Esophagus muscularis mucosa (tissue), 4 donors: ENCODE measurements at regions of chr19 and their contacts with region 1.

Region 1: GRCh38 chr19:37506387-37507166 is at the start of gene ZNF793:
- DNase-seq: peak; percentile 93
- H3K4me3 ChIP-seq: peak within 1 kb of the TSS; percentile 71 to 81 (median 78)
- H3K27ac ChIP-seq: peak within 1 kb of the TSS; percentile 90 to 97 (median 93)
- H3K4me1 ChIP-seq: peaks cover 12 to 24% (median 17%) of the 10 kb centered on the region in 4 donors
- H3K27me3 ChIP-seq: no peaks in the 10 kb centered on the region
- CTCF ChIP-seq: no peak
- EP300 ChIP-seq: no peak
- POLR2A ChIP-seq: no peak
- total RNA-seq, gene ZNF793: 3.0 to 7.1 (median 5.3) TPM

Region 2: GRCh38 chr19:37334179-37335071 is 172.2 kb before region 1 on chr19:
- intact Hi-C with region 1: loop called (anchors 10 kb)
- DNase-seq: peak; percentile 96
- H3K4me3 ChIP-seq: peak overlapping the region; percentile 68 to 85 (median 80)
- H3K27ac ChIP-seq: peak overlapping the region; percentile 85 to 91 (median 88)
- H3K4me1 ChIP-seq: peaks cover 23 to 51% (median 41%) of the 10 kb centered on the region in 4 donors
- H3K27me3 ChIP-seq: no peaks in the 10 kb centered on the region
- CTCF ChIP-seq: no peak
- EP300 ChIP-seq: no peak
- POLR2A ChIP-seq: no peak

Region 3: DNA sequence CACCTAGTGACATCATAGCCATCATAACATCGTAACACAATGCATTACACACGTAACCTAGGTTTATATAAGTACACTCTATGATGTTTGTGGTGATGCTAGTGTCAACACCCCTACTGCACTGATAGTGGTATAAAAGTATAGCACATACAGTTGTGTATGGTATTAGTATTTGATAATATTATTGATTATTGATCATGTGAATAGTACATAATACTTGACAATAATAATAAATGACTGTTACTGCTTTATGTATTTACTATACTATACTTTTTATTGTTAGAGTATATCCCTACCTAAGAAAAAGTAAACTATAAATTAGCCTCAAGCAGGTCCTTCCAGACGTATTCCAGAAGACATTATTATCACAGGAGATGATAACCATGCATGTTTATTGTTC is 43.3 kb before region 1 on chr19:
- intact Hi-C with region 1: no loop called
- DNase-seq: no peak
- H3K4me3 ChIP-seq: no peak overlapping the region
- H3K27ac ChIP-seq: no peak overlapping the region
- H3K4me1 ChIP-seq: peaks cover 10 to 20% (median 19%) of the 10 kb centered on the region in 4 donors
- H3K27me3 ChIP-seq: no peaks in the 10 kb centered on the region
- CTCF ChIP-seq: no peak
- EP300 ChIP-seq: no peak
- POLR2A ChIP-seq: no peak